Ascending aorta (tissue), 2 donors: ENCODE measurements at regions of chr20 and their contacts with region 1.

Region 1: GRCh38 chr20:3753098-3753980 is 14.2 kb downstream of the ADISSP start:
- DNase-seq: peak in 1 of 2 donors; percentile 78
- H3K4me3 ChIP-seq: no peak overlapping the region
- H3K27ac ChIP-seq: no peak overlapping the region
- H3K4me1 ChIP-seq: peaks cover 3 to 8% of the 10 kb centered on the region in 2 donors
- H3K27me3 ChIP-seq: no peaks in the 10 kb centered on the region
- CTCF ChIP-seq: peak; percentile 66 to 75 (median 67)

Region 2: DNA sequence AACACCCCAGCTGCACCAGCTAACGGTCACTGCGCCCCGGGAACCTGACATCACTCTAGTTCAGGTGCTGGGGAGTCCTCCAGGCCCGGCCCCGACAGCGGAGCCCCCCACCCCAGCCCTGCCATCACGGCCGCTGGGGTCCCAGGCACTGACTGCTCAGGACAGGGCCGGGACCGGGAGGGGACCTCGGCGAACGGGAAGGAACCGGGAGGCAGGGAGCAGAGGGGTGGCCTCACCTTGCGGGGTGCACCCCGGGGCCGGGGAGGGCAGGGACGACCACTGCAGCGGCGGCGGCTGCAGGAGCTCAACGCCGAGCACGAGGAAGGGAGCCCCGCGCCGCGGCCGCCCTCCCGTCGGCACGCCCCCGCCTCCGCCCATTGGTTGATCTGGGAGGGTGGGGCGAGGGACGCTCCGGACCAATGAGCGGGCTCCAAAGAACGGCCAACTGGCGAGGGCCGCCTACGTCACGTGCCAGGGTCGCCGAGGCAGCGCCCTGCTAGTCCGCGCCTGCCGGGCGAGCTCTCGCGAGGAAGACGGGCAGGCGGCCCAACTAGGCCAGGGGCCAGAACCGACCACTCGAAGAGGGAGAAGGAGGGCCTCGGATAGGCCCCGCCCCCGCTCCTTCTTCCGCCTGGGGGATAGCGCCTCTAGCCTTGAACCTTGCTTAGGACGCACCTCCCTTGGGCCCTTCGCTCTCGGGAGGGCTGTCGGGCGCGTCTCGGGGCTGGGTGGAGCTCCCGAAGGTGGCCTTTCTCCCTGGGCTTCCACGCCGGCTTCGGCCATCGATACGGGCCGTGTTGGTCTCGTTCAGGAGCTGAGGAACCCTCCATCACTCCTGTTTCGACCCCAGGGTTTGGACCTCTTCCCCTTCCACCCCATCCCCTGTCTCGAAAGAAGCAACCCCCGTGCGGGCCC is 14.3 kb after region 1 on chr20 and contains the start of gene ADISSP:
- intact Hi-C with region 1: loop called (anchors 2 kb)
- DNase-seq: peak; percentile 95 to 99
- H3K4me3 ChIP-seq: peak within 1 kb of the TSS; percentile 78
- H3K27ac ChIP-seq: peak within 1 kb of the TSS; percentile 85 to 87
- H3K4me1 ChIP-seq: peaks cover 5 to 11% of the 10 kb centered on the region in 2 donors
- H3K27me3 ChIP-seq: no peaks in the 10 kb centered on the region
- CTCF ChIP-seq: peak in 1 of 3 experiments; percentile 7
- total RNA-seq, gene ADISSP: 48.4 TPM

Region 3: GRCh38 chr20:3781153-3781910 is 28.0 kb after region 1 on chr20 and contains the start of gene SPEF1:
- intact Hi-C with region 1: loop called (anchors 2 kb)
- DNase-seq: peak; percentile 61 to 93
- H3K4me3 ChIP-seq: peak within 1 kb of the TSS; percentile 28 to 30
- H3K27ac ChIP-seq: peak within 1 kb of the TSS; percentile 44 to 57
- H3K4me1 ChIP-seq: peaks cover 26 to 38% of the 10 kb centered on the region in 2 donors
- H3K27me3 ChIP-seq: no peaks in the 10 kb centered on the region
- CTCF ChIP-seq: peak; percentile 24 to 50 (median 30)
- total RNA-seq, gene SPEF1: not detected

Region 4: GRCh38 chr20:3935295-3935955 is 182.1 kb after region 1 on chr20:
- intact Hi-C with region 1: no loop called
- DNase-seq: peak in 1 of 2 donors; percentile 76
- H3K4me3 ChIP-seq: no peak overlapping the region
- H3K27ac ChIP-seq: peak overlapping the region; percentile 65 to 68
- H3K4me1 ChIP-seq: peaks cover 22 to 52% of the 10 kb centered on the region in 2 donors
- H3K27me3 ChIP-seq: no peaks in the 10 kb centered on the region
- CTCF ChIP-seq: no peak